AG04450 (cell line): ENCODE measurements at regions of chr15 and their contacts with region 1.

Region 1: DNA sequence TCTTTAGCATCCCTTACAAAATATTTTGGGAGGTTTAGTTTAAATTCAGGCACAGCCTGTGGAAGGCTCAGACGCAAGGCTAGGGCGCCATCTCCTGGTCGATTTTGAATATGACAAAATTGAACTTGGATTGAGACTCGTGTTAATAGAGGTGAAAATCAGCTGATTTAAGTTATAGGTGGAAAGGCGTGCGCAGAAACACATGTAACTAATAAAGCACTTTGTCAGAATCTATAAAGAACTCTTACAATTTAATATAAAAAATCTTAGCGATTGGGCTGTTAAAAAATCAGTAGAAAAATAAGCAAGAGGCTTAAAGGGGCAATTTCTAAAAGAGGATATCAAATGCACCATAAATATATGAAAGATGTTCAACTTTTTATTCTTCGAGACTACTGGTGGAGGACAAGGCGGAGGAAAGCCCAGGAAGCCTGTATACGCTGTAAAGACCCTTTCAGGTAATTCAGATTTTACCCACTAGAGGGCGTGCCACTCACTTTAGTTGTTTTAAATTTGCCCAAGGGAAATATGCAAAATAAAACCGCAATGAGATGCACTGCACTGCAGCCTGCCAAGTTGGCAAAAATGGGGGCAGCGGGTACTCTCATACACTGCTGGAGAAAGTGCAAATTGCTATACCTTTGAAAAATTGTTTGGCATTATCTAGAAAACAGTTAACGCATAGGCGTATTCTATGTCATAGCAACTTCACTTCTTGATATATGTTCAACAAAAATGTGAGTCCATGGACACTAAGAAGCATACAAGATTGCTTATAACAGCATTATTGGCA is 64.7 kb downstream of the SLC30A4 start:
- DNase-seq: peak; percentile 63
- H3K4me3 ChIP-seq: peak overlapping the region; percentile 58
- H3K27ac ChIP-seq: no peak overlapping the region
- H3K27me3 ChIP-seq: no peaks in the 10 kb centered on the region
- CTCF ChIP-seq: peak; percentile 68

Region 2: DNA sequence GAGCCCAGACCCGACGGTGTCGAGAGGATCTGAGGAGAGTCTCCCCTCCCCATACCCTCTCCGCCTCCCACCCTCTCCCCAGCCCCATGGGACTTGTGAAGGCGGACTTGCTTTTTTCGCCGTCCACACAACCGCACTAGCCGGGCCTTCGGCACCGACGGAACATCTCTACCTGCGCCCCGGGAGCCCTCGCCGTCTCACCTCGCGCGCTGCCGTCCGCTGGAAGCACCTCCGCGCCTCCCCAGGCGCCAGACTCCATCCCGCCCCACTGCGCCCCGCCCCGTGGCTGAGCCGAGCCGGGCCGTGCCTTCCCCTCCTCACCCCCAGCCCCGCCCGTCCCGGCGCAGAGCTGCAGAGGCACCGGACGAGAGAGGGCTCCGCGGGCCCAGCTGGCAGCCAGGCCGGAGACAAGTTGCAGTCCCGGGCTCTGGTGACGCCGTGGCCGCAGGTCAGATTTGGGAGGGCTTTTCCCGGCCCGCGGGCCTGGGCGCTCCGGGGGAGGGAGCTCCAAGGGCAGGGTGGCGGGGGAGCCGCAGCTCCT is 328.1 kb before region 1 on chr15 and contains the starts of genes DUOX1 and DUOXA1:
- CTCF ChIA-PET with region 1: no interaction called
- POLR2A ChIA-PET with region 1: no interaction called
- DNase-seq: no peak
- H3K4me3 ChIP-seq: no peak within 1 kb of the TSS
- H3K27ac ChIP-seq: no peak within 1 kb of the TSS
- H3K27me3 ChIP-seq: peaks cover 66% of the 10 kb centered on the region
- CTCF ChIP-seq: no peak
- polyA plus RNA-seq, gene DUOX1: not detected in 2 replicates
- polyA plus RNA-seq, gene DUOXA1: not detected in 2 replicates

Region 3: DNA sequence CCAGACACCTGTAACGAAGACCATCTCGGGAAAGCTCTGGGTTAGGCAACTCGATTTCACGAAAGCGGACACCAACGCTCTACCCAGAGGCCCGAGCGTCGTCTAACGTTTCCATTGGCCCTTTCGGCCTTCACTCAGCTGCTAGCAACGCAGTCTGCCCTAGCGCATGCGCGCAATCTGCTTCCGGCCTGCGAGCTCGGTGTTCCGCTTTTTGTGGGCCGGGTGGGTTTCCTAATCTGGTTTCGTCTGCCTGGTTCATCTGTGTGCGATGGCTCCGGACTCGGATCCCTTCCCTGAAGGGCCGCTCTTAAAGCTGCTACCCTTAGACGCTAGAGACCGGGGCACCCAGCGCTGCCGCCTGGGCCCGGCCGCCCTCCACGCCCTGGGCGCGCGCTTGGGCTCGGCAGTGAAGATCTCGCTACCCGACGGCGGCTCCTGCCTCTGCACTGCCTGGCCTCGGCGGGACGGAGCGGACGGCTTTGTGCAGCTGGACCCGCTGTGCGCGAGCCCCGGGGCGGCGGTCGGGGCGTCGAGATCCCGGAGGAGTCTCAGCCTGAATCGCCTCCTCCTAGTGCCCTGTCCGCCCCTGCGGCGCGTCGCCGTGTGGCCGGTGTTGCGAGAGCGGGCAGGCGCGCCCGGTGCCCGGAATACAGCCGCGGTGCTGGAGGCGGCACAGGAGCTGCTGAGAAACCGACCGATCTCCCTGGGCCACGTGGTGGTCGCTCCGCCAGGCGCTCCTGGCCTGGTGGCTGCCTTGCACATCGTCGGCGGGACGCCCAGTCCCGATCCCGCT is 55.5 kb before region 1 on chr15:
- CTCF ChIA-PET with region 1: interaction called, 59 read pairs
- POLR2A ChIA-PET with region 1: no interaction called
- DNase-seq: peak; percentile 98
- H3K4me3 ChIP-seq: peak overlapping the region; percentile 87
- H3K27ac ChIP-seq: peak overlapping the region; percentile 53
- H3K27me3 ChIP-seq: peaks cover 3% of the 10 kb centered on the region
- CTCF ChIP-seq: no peak

Region 4: DNA sequence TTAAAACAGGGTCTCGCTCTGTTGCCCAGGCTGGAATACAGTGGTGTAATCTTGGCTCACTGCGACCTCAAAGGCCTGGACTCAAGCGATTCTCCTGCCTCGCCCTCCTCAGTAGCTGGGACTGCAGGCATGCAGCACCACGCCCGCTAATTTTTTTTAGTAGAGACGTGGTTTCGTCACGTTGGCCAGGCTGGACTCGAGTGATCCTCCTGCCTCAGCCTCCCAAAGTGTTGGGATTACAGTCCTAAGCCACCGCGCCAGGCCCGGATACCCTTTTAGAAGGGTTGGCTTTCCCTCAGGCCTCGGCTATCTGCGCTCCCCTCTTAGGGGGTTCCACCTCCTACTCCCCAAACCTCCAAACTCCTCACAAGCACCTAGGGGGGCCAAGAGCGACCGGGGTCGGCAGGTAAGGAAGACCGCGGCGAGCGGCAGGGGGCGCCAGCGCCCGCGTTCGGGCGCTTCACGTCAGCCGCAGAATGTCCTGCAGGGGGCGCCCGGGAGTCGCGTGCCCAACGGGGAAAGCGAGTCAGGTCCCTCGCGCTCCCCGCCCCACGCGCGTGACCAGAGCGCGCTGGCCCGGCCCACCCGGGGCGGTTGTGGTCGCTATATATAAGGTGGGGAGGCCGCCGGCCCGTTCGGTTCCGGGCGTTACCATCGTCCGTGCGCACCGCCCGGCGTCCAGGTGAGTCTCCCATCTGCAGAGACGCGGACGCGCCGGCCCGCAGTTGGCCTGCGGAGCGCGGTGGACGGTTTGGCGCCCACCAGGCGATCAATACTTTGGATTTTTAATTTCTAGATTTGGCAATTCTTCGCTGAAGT is 27.7 kb before region 1 on chr15:
- CTCF ChIA-PET with region 1: interaction called, 376 read pairs
- POLR2A ChIA-PET with region 1: no interaction called
- DNase-seq: peak; percentile 10
- H3K4me3 ChIP-seq: peak overlapping the region; percentile 59
- H3K27ac ChIP-seq: no peak overlapping the region
- H3K27me3 ChIP-seq: peaks cover 3% of the 10 kb centered on the region
- CTCF ChIP-seq: peak; percentile 100

Region 5: GRCh38 chr15:45468294-45468693 is 10.5 kb after region 1 on chr15:
- CTCF ChIA-PET with region 1: interaction called, 25 read pairs
- POLR2A ChIA-PET with region 1: no interaction called
- DNase-seq: no peak
- H3K4me3 ChIP-seq: no peak overlapping the region
- H3K27ac ChIP-seq: no peak overlapping the region
- H3K27me3 ChIP-seq: peaks cover 10% of the 10 kb centered on the region
- CTCF ChIP-seq: no peak

Region 6: GRCh38 chr15:45604326-45604725 is 146.5 kb after region 1 on chr15:
- CTCF ChIA-PET with region 1: interaction called, 19 read pairs
- POLR2A ChIA-PET with region 1: no interaction called
- DNase-seq: no peak
- H3K4me3 ChIP-seq: no peak overlapping the region
- H3K27ac ChIP-seq: no peak overlapping the region
- H3K27me3 ChIP-seq: no peaks in the 10 kb centered on the region
- CTCF ChIP-seq: no peak

Region 7: GRCh38 chr15:45641374-45641781 is 183.5 kb after region 1 on chr15:
- CTCF ChIA-PET with region 1: interaction called, 18 read pairs
- POLR2A ChIA-PET with region 1: no interaction called
- DNase-seq: peak; percentile 90
- H3K4me3 ChIP-seq: no peak overlapping the region; the same call in 1 of the 2 replicates
- H3K27ac ChIP-seq: peak overlapping the region; percentile 95
- H3K27me3 ChIP-seq: no peaks in the 10 kb centered on the region
- CTCF ChIP-seq: peak; percentile 16; the same call in 1 of the 2 replicates